ENCODE measurements at regions of chr6 and their contacts with region 1.

Region 1: GRCh38 chr6:35139908-35140655 is 1.1 kb downstream of the TCP11 start:
- DNase-seq: peak in 1 of 2 experiments; percentile 54
- H3K4me3 ChIP-seq: no peak overlapping the region
- H3K27ac ChIP-seq: no peak overlapping the region
- H3K4me1 ChIP-seq: peaks cover 0 to 3% (median under 1%) of the 10 kb centered on the region in 4 experiments; a peak in 1 of 7 replicates
- H3K27me3 ChIP-seq: peaks cover 0 to 12% (median 12%) of the 10 kb centered on the region in 4 experiments; a peak in 5 of 7 replicates
- CTCF ChIP-seq: peak in 2 of 3 experiments; percentile 81 to 82; a peak in 3 of 4 replicates
- EP300 ChIP-seq: no peak
- POLR2A ChIP-seq: no peak
- RAD21 ChIP-seq: peak; percentile 97 to 98

Region 2: GRCh38 chr6:34696739-34697543 is 443.1 kb before region 1 on chr6 and contains the start of gene ILRUN:
- CTCF ChIA-PET with region 1: no interaction called
- POLR2A ChIA-PET with region 1: no interaction called
- DNase-seq: peak; percentile 65 to 98
- H3K4me3 ChIP-seq: peak within 1 kb of the TSS; percentile 85 to 96 (median 88)
- H3K27ac ChIP-seq: peak within 1 kb of the TSS; percentile 47
- H3K4me1 ChIP-seq: peaks cover 0 to 7% (median under 1%) of the 10 kb centered on the region in 4 experiments; a peak in 3 of 7 replicates
- H3K27me3 ChIP-seq: no peaks in the 10 kb centered on the region
- CTCF ChIP-seq: no peak
- EP300 ChIP-seq: no peak; a peak in 1 of 3 replicates
- POLR2A ChIP-seq: no peak
- RAD21 ChIP-seq: no peak
- total RNA-seq, gene ILRUN: 81.2 TPM in 2 replicates

Region 3: GRCh38 chr6:35057449-35058357 is 82.4 kb before region 1 on chr6:
- CTCF ChIA-PET with region 1: interaction called, 15 read pairs
- POLR2A ChIA-PET with region 1: no interaction called
- DNase-seq: no peak
- H3K4me3 ChIP-seq: no peak overlapping the region
- H3K27ac ChIP-seq: no peak overlapping the region
- H3K4me1 ChIP-seq: peaks cover 0 to 1% (median under 1%) of the 10 kb centered on the region in 4 experiments; a peak in 2 of 7 replicates
- H3K27me3 ChIP-seq: no peaks in the 10 kb centered on the region
- CTCF ChIP-seq: no peak
- EP300 ChIP-seq: no peak
- POLR2A ChIP-seq: no peak
- RAD21 ChIP-seq: no peak

Region 4: GRCh38 chr6:35089935-35090505 is 50.1 kb before region 1 on chr6:
- CTCF ChIA-PET with region 1: interaction called, 20 read pairs
- POLR2A ChIA-PET with region 1: no interaction called
- DNase-seq: peak in 1 of 2 experiments; percentile 42
- H3K4me3 ChIP-seq: no peak overlapping the region
- H3K27ac ChIP-seq: no peak overlapping the region
- H3K4me1 ChIP-seq: peaks cover 0 to 3% (median 0%) of the 10 kb centered on the region in 4 experiments; a peak in 5 of 7 replicates
- H3K27me3 ChIP-seq: no peaks in the 10 kb centered on the region
- CTCF ChIP-seq: no peak
- EP300 ChIP-seq: no peak
- POLR2A ChIP-seq: no peak
- RAD21 ChIP-seq: no peak

Region 5: GRCh38 chr6:35108309-35108885 is 31.7 kb before region 1 on chr6:
- CTCF ChIA-PET with region 1: interaction called, 11 read pairs
- POLR2A ChIA-PET with region 1: no interaction called
- DNase-seq: no peak
- H3K4me3 ChIP-seq: no peak overlapping the region
- H3K27ac ChIP-seq: no peak overlapping the region
- H3K4me1 ChIP-seq: no peaks in the 10 kb centered on the region
- H3K27me3 ChIP-seq: no peaks in the 10 kb centered on the region
- CTCF ChIP-seq: no peak
- EP300 ChIP-seq: no peak
- POLR2A ChIP-seq: no peak
- RAD21 ChIP-seq: no peak

Region 6: DNA sequence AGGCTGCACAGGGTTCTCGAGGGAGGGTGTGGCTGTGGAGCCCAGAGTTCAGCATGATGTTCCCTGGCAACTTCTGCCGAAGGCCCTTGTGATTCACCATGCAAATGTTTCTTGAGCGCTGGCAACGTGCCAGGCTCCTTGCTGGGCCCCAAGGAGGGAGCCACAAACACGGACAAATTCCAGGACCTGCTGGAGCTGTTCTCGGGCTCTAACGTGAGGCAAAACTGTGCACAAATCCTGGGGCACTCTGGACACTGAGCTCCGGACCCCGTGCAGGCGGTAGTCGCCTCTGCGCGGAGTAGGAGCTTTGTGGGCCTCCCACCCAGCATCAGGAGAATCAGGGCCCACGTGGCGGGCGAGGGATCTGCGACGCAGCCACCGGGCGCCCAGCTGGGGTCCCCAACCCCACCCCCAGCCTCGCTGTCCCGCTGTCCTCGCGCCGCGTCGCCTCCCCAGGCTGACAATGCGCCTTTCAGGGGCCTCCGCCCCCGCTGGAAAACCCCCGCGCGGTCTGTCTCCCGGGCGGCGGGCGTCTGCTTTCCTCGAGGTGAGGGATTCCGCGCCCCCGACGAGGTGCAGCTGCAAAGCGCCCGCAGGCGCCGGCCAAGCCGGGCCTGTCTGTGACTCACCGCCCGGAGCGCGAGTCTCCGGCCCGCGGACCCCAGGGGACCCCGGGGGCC is 42.0 kb after region 1 on chr6:
- CTCF ChIA-PET with region 1: interaction called, 35 read pairs
- POLR2A ChIA-PET with region 1: no interaction called
- DNase-seq: peak in 1 of 2 experiments; percentile 64
- H3K4me3 ChIP-seq: peak overlapping the region in 1 of 4 experiments; percentile 46; a peak in 3 of 8 replicates
- H3K27ac ChIP-seq: no peak overlapping the region
- H3K4me1 ChIP-seq: peaks cover 0 to 5% (median 4%) of the 10 kb centered on the region in 4 experiments; a peak in 5 of 7 replicates
- H3K27me3 ChIP-seq: peaks cover 0 to 14% (median 4%) of the 10 kb centered on the region in 4 experiments; a peak in 4 of 7 replicates
- CTCF ChIP-seq: no peak
- EP300 ChIP-seq: no peak
- POLR2A ChIP-seq: no peak
- RAD21 ChIP-seq: no peak

Region 7: DNA sequence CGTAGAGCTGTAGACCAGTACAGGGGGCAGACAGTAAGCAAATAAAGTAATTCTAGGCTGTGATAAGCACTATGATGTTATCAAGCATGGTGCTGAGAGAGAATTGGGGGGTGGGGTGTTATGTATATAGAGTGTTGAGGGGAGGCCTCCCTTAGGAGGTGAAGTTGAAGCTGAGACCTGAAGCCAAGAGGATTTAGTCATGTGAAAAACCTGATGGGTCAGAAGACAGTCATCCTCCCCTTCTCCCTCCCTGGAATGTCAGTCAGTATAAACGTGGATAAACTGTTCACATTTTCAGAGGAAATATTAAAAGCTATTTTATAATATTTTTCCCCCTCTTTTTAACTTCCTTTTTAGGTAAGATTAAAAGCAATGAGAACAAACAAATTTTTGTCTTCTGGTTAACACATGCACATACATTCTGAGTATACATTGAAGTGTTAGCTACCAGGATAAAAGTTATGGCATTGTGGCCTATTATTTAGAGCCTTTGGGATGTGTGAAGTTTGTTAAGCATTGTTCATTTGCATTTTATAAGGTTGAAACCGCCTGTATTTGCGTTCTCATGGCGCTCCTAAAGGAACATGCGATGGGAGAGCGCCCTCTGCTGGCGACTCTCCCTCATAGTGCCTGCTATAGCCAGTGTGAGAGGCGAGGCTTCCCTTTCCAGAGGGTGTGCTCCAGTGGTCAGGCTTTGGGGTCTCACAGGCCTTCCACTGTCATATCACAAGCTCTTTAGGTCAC is 954.8 kb after region 1 on chr6:
- CTCF ChIA-PET with region 1: no interaction called
- POLR2A ChIA-PET with region 1: no interaction called
- DNase-seq: peak; percentile 50 to 86
- H3K4me3 ChIP-seq: no peak overlapping the region
- H3K27ac ChIP-seq: no peak overlapping the region
- H3K4me1 ChIP-seq: peaks cover 0 to 4% (median 0%) of the 10 kb centered on the region in 4 experiments; a peak in 1 of 7 replicates
- H3K27me3 ChIP-seq: no peaks in the 10 kb centered on the region
- CTCF ChIP-seq: peak; percentile 87 to 95 (median 94)
- EP300 ChIP-seq: no peak
- POLR2A ChIP-seq: no peak
- RAD21 ChIP-seq: peak; percentile 95 to 96